ENCODE measurements at regions of chr17 and their contacts with region 1.

Region 1: DNA sequence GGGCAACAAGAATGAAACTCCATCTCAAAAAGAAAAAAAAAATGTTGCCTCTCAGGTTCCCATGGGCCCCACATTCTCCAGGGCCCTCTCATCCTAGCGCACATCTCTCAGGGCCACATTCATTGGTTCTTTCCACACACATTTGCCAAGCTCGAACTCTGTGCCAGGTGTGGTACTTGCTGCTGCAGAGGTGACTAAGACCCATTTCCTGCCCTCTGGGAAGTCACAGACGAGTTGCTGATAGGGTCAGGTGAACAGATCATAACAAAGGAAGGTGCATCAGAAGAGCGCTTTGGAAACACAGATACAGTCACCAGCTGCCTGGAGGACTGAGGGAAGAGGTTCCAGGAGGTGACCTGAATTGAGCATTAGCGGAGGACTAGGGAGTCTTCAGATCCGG is 1.0 kb downstream of the GSDMA start:
- DNase-seq: peak in 4 of 5 donors; percentile 17 to 51 (median 27)
- H3K4me3 ChIP-seq: no peak overlapping the region
- H3K4me3 Mint-ChIP-seq: peak overlapping the region in 6 of 8 donors; percentile 13 to 83 (median 47)
- H3K27ac ChIP-seq: no peak overlapping the region
- H3K27ac Mint-ChIP-seq: peak overlapping the region in 6 of 7 donors; percentile 38 to 95 (median 81)
- H3K4me1 ChIP-seq: peaks cover 30% of the 10 kb centered on the region
- H3K4me1 Mint-ChIP-seq: peaks cover 19 to 55% (median 35%) of the 10 kb centered on the region in 4 donors
- H3K27me3 ChIP-seq: no peaks in the 10 kb centered on the region
- H3K27me3 Mint-ChIP-seq: peaks cover 2 to 5% of the 10 kb centered on the region in 2 donors

Region 2: DNA sequence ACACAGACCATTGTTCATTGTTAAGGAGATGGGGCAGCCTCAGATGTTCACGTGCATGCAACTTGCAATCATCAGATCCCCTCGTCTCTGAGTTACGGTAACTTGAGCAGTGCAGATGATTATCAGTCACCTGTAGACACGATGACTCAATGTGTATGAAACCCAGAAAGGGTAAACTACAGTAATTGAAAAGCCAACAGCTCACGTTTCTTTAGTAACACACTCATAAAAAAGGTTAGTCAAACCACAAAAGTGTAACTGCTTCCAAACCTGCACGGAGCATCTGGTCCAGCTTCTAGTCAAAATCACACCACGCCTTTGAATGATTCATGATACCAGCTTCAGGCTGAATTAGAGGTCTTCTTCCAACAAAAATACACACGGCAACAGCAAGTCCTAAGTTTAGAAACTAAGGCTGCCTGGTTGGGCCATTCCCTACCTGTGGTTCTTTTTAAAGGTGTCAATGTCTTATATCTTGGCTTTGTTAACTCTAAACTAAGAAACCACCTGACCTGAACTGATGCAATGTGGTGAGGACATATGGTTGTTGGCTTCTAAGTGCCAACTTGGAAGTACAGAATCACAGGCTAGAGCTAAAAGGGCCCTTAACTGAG is 193.7 kb before region 1 on chr17:
- CTCF ChIA-PET with region 1: no interaction called
- POLR2A ChIA-PET with region 1: no interaction called
- intact Hi-C with region 1: no loop called
- DNase-seq: peak; percentile 67 to 92 (median 72)
- H3K4me3 ChIP-seq: peak overlapping the region in 1 of 2 donors; percentile 6
- H3K4me3 Mint-ChIP-seq: peak overlapping the region; percentile 33 to 96 (median 66)
- H3K27ac ChIP-seq: peak overlapping the region; percentile 77
- H3K27ac Mint-ChIP-seq: peak overlapping the region; percentile 88 to 98 (median 95)
- H3K4me1 ChIP-seq: peaks cover 100% of the 10 kb centered on the region
- H3K4me1 Mint-ChIP-seq: peaks cover 81 to 100% (median 89%) of the 10 kb centered on the region in 4 donors
- H3K27me3 ChIP-seq: no peaks in the 10 kb centered on the region
- H3K27me3 Mint-ChIP-seq: no peaks in the 10 kb centered on the region

Region 3: DNA sequence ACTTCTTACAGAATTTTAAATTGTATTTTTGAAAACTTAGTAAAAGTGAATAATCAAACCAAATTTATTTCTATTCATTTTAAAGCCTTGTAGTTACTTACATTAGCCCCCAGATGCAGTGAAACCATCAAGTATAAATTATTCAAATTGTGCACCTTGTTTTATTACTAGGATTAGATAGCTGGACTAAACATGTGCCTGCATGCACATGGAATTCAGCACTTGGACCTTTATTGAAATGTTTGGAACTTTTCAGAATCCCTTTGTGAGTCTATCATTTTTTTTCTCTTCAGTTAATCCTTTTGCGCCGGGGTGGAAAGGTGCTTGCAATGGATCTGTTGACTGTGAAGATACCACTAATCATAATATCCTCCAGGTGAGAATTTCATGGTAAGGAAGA is 91.1 kb before region 1 on chr17:
- CTCF ChIA-PET with region 1: interaction called, 9 read pairs
- POLR2A ChIA-PET with region 1: interaction called, 3 read pairs
- intact Hi-C with region 1: loop called (anchors 1 kb)
- DNase-seq: no peak
- H3K4me3 ChIP-seq: no peak overlapping the region
- H3K4me3 Mint-ChIP-seq: no peak overlapping the region
- H3K27ac ChIP-seq: no peak overlapping the region
- H3K27ac Mint-ChIP-seq: peak overlapping the region in 1 of 7 donors; percentile 10
- H3K4me1 ChIP-seq: peaks cover 4% of the 10 kb centered on the region
- H3K4me1 Mint-ChIP-seq: peaks cover 5 to 17% (median 13%) of the 10 kb centered on the region in 4 donors
- H3K27me3 ChIP-seq: no peaks in the 10 kb centered on the region
- H3K27me3 Mint-ChIP-seq: no peaks in the 10 kb centered on the region

Region 4: DNA sequence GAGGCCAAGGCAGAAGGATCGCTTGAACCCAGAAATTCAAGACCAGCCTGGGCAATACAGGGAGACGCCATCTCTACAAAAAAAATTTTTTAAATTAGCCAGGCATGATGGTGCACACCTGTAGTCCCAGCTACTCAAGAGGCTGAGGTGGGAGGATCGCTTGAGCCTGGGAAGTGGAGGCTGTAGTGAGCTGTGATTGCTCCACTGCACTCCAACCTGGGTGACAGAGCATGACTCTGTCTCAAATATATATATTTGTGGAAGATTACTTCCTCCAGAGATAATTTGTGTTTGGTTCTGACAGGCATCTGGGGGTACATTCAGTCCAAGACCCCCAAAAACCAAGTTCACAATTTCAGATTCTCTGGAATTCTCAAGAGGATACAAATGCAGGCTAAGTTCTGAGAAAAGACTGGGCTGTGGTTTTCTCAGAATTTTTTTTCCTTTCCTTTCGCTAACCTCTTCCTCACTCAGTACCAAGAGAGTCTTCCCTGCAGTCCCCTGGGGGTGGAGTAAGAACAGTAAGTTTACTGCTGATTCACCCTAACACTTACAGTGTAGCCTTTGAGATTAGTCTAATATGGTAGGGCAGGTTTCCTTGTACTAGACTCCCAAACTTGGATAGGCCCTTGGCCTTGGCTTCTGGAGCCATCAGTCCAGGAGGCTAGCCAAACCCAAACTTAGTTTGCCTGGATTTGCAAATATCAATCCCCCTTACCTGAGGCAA is 60.5 kb before region 1 on chr17:
- CTCF ChIA-PET with region 1: no interaction called
- POLR2A ChIA-PET with region 1: no interaction called
- intact Hi-C with region 1: no loop called
- DNase-seq: no peak
- H3K4me3 ChIP-seq: no peak overlapping the region
- H3K4me3 Mint-ChIP-seq: peak overlapping the region in 4 of 8 donors; percentile 43 to 71 (median 60)
- H3K27ac ChIP-seq: no peak overlapping the region
- H3K27ac Mint-ChIP-seq: peak overlapping the region in 6 of 7 donors; percentile 24 to 81 (median 50)
- H3K4me1 ChIP-seq: peaks cover 23% of the 10 kb centered on the region
- H3K4me1 Mint-ChIP-seq: peaks cover 10 to 24% (median 17%) of the 10 kb centered on the region in 4 donors
- H3K27me3 ChIP-seq: no peaks in the 10 kb centered on the region
- H3K27me3 Mint-ChIP-seq: no peaks in the 10 kb centered on the region

Region 5: DNA sequence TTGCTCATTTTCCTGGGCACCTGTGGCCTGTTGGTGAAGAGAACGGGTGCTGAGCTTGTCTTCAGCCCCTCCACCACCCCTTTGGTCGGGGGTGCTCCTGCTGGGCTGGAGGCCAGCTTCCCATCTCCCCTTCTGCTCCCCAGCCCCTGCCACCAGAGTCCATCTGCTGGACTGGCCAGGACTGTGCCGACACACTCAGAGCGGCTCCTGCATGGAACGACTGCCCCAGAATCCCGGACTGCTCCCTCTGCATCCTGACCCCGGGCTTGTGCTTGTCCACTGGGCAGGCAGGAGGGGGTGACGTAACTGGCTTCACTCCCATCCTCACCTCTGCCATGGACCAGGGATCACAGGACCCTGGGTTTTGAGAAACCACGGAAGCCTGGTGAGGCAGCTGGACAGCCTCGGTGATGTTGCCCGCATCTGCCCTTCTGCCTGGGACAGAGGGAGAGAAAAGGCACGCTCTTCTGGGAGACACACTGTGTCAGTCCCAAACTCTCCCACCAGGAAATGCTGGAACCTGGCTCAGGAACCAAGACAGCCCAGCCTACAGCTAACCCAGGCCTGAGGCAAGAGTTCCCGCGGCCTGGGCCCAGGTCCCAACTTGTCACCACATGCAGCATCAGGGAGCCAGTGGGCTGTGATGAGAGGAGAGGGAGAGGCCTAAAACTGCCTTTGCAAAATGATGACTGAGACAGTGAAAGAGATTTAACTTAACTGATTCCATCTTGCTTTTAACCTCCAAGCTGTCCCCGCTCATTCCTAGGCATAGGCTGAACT is 17.1 kb before region 1 on chr17:
- CTCF ChIA-PET with region 1: no interaction called
- POLR2A ChIA-PET with region 1: no interaction called
- intact Hi-C with region 1: no loop called
- DNase-seq: no peak
- H3K4me3 ChIP-seq: no peak overlapping the region
- H3K4me3 Mint-ChIP-seq: no peak overlapping the region
- H3K27ac ChIP-seq: no peak overlapping the region
- H3K27ac Mint-ChIP-seq: no peak overlapping the region
- H3K4me1 ChIP-seq: no peaks in the 10 kb centered on the region
- H3K4me1 Mint-ChIP-seq: peaks cover 0 to 8% (median 3%) of the 10 kb centered on the region in 4 donors
- H3K27me3 ChIP-seq: no peaks in the 10 kb centered on the region
- H3K27me3 Mint-ChIP-seq: no peaks in the 10 kb centered on the region

Region 6: DNA sequence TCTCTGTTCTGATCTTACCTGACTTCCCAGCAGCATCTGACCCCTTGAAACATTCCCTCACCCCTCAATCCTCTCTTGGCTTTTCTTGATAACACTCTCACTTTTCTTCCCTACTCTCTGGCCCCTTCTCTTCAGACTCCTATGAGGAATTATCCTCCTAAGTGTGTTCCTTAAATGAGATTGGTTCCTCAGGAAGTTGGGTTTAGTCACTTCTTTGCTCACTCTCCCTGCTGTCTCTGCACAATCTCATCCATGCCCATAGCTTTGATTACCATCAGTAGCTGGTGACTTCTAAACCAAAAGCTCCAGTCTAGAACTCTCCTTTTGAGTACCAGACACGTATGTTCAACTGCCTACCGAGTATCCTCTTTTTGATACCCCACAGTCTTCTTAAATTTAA is 77.4 kb after region 1 on chr17:
- CTCF ChIA-PET with region 1: no interaction called
- POLR2A ChIA-PET with region 1: no interaction called
- intact Hi-C with region 1: no loop called
- DNase-seq: no peak
- H3K4me3 ChIP-seq: no peak overlapping the region
- H3K4me3 Mint-ChIP-seq: no peak overlapping the region
- H3K27ac ChIP-seq: no peak overlapping the region
- H3K27ac Mint-ChIP-seq: peak overlapping the region in 1 of 7 donors; percentile 23
- H3K4me1 ChIP-seq: no peaks in the 10 kb centered on the region
- H3K4me1 Mint-ChIP-seq: peaks cover 0 to 6% (median 2%) of the 10 kb centered on the region in 4 donors
- H3K27me3 ChIP-seq: no peaks in the 10 kb centered on the region
- H3K27me3 Mint-ChIP-seq: no peaks in the 10 kb centered on the region